A549 (cell line): ENCODE measurements at regions of chr20 and their contacts with region 1.

Region 1: GRCh38 chr20:56995576-56996075 is 270.8 kb downstream of the BMP7 start:
- DNase-seq: peak; percentile 36 to 45
- ATAC-seq: peak; percentile 60 to 79; a peak in 4 of 6 replicates
- H3K4me3 ChIP-seq: no peak overlapping the region
- H3K27ac ChIP-seq: no peak overlapping the region
- H3K4me1 ChIP-seq: no peaks in the 10 kb centered on the region
- CTCF ChIP-seq: peak; percentile 52
- EP300 ChIP-seq: no peak
- POLR2A ChIP-seq: no peak
- RAD21 ChIP-seq: peak; percentile 56 to 58

Region 2: DNA sequence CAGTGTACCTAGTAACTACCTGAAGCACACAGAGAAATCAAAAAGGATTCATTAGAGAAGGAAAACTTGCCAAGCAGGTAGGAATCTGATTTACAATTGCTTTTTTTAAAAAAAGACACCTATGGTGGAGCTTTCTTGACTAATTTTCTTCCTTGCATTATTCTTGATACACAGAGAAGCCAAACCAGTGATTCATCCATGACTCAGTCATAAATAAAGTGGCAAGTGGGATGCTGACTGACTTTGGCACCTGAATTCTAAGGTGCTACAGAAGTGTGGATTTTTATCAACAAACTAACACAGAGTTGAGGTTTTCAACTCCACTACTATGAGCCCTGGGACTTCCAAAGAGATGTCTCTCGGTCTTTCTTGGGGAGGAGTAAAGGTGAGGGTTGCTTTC is 10.3 kb before region 1 on chr20:
- CTCF ChIA-PET with region 1: interaction called, 36 read pairs
- POLR2A ChIA-PET with region 1: no interaction called
- DNase-seq: no peak
- ATAC-seq: no peak
- H3K4me3 ChIP-seq: no peak overlapping the region
- H3K27ac ChIP-seq: no peak overlapping the region
- H3K4me1 ChIP-seq: no peaks in the 10 kb centered on the region
- CTCF ChIP-seq: no peak
- EP300 ChIP-seq: no peak
- POLR2A ChIP-seq: no peak
- RAD21 ChIP-seq: no peak

Region 3: GRCh38 chr20:57006411-57007170 is 11.0 kb after region 1 on chr20:
- CTCF ChIA-PET with region 1: interaction called, 13 read pairs
- POLR2A ChIA-PET with region 1: no interaction called
- DNase-seq: peak; percentile 31 to 42
- ATAC-seq: peak in 1 of 2 experiments; percentile 54; a peak in 4 of 6 replicates
- H3K4me3 ChIP-seq: no peak overlapping the region
- H3K27ac ChIP-seq: peak overlapping the region in 1 of 2 experiments; percentile 73; a peak in 3 of 6 replicates
- H3K4me1 ChIP-seq: peaks cover 30% of the 10 kb centered on the region
- CTCF ChIP-seq: no peak
- EP300 ChIP-seq: no peak
- POLR2A ChIP-seq: no peak
- RAD21 ChIP-seq: no peak